B cell (primary cell): ENCODE measurements at regions of chr3 and their contacts with region 1.

Region 1: DNA sequence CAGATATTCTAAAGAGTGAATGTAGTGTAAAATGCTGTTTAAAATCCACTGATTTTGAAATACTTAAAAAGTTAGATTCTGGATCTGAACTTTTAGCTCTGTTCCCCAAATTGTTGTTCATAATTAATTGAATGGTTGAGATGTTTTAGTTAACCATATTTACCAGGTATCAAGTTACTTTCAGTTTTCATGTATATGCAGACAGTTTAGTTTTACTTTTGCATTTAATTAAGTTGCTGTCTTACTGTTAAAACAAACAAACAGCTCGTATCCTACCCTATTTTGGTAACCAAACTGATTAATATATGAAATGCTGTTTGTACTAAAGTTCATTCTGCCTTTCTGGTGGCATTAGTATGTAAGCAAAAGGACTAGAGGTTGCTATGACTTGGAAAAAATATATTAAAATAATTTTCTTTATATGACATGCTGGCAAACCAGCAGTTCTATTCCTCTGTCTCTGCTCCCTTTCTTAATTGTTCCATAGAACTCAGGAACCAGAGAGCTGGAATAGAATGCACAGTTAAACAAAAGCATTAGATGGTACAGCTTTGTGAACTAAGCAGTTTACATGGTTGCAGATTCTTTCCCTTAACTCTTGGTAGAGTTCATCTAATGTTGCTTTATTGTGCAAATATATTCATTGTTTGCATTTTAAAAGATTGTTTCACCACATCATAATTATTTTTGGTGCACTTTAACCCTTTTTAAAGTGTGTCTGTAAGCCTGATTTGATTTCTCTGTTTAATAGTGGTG is 39.5 kb upstream of the SCAANT1 start:
- DNase-seq: no peak
- ATAC-seq: no peak
- H3K4me3 ChIP-seq: no peak overlapping the region
- H3K4me3 Mint-ChIP-seq: peak overlapping the region; percentile 4
- H3K27ac ChIP-seq: peak overlapping the region in 1 of 2 donors; percentile 37
- H3K27ac Mint-ChIP-seq: peak overlapping the region; percentile 1
- H3K4me1 ChIP-seq: peaks cover 6 to 16% of the 10 kb centered on the region in 2 donors
- H3K4me1 Mint-ChIP-seq: peaks cover 46% of the 10 kb centered on the region
- H3K27me3 ChIP-seq: no peaks in the 10 kb centered on the region
- H3K27me3 Mint-ChIP-seq: no peaks in the 10 kb centered on the region
- CTCF ChIP-seq: no peak

Region 2: DNA sequence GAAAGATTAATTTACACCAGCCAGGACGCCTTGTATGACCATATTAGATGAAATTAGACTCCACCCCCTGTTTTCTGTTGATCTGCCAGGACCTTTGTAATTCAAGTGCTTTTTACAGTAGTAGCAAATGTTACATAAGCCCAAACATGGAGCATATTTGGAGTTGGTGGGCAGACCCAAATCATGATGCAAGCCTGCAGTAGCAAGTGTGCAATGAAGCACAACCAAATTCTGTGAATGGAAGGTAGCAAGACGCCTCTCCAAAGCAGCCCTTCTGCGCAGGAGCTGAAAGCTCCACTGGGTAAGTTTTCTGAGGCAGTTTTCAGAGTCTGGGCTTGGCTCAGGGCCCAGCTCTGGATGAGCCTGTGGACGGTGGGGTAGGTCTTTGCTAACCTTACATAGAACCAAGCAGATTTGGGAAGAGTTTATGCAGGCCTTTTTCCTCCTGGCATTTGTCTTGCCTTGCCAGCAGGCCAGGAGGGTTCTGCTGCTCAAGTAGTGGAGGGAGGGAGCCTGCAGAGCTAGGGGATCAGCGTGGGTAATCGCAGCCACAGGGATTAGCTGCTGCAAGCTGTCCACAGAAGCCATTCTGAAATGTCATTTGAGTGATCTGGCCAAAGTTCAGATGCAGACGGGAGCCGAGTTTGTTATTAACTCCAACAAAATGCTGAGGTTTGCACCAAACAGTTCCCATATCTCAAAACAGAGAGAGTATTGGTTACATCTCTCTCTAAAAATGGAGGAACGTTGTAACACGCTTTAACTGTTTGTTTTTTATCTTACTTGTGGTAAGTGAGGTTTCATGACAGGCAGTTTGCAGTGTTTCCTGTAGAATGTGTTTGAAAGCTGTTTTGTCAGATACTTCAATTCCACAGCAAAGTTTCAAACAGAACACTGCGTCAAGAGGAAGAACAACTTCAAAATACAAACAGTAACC is 16.3 kb after region 1 on chr3:
- CTCF ChIA-PET with region 1: interaction called, 4 read pairs
- POLR2A ChIA-PET with region 1: no interaction called
- intact Hi-C with region 1: loop called (anchors 2 kb)
- DNase-seq: peak; percentile 33
- ATAC-seq: peak; percentile 54
- H3K4me3 ChIP-seq: peak overlapping the region; percentile 0 to 38 (median 15)
- H3K4me3 Mint-ChIP-seq: peak overlapping the region; percentile 59
- H3K27ac ChIP-seq: peak overlapping the region; percentile 11 to 53
- H3K27ac Mint-ChIP-seq: peak overlapping the region; percentile 58
- H3K4me1 ChIP-seq: peaks cover 19 to 20% of the 10 kb centered on the region in 2 donors
- H3K4me1 Mint-ChIP-seq: peaks cover 45% of the 10 kb centered on the region
- H3K27me3 ChIP-seq: no peaks in the 10 kb centered on the region
- H3K27me3 Mint-ChIP-seq: no peaks in the 10 kb centered on the region
- CTCF ChIP-seq: no peak

Region 3: DNA sequence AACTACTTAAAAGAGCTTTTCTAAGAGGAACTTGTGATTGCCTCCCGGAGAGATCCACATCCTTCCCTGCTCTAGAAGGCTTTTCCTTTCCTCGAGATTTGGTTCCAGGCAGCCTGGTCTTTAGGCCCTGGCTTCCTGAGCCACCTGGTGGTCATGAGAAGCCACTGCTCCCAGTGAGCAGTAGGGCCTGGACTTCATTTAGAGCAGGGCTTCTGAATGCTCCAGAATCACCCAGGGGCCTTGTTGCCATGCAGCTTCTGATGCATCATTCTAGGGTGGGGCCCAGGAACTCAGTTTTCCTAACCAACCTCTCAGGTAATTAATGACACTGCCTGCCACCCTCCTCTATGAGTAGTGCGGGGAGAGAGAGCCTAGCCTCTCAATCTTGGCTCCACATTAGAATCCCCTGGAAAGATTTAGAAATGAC is 42.0 kb after region 1 on chr3:
- CTCF ChIA-PET with region 1: no interaction called
- POLR2A ChIA-PET with region 1: no interaction called
- intact Hi-C with region 1: no loop called
- DNase-seq: peak; percentile 60
- ATAC-seq: peak; percentile 75
- H3K4me3 ChIP-seq: no peak overlapping the region
- H3K4me3 Mint-ChIP-seq: no peak overlapping the region
- H3K27ac ChIP-seq: no peak overlapping the region
- H3K27ac Mint-ChIP-seq: no peak overlapping the region
- H3K4me1 ChIP-seq: no peaks in the 10 kb centered on the region
- H3K4me1 Mint-ChIP-seq: no peaks in the 10 kb centered on the region
- H3K27me3 ChIP-seq: no peaks in the 10 kb centered on the region
- H3K27me3 Mint-ChIP-seq: no peaks in the 10 kb centered on the region
- CTCF ChIP-seq: peak; percentile 96